Naive thymus-derived CD8-positive, alpha-beta T cell (primary cell): ENCODE measurements at regions of chr12 and their contacts with region 1.

Region 1: GRCh38 chr12:122871851-122872780 is 23.8 kb downstream of the VPS37B start:
- DNase-seq: peak in 4 of 10 donors; percentile 37 to 62 (median 42)
- ATAC-seq: peak; percentile 42 to 49
- H3K4me3 Mint-ChIP-seq: peak overlapping the region; percentile 75 to 97 (median 91)
- H3K27ac Mint-ChIP-seq: peak overlapping the region; percentile 88 to 97 (median 94)
- H3K4me1 Mint-ChIP-seq: peaks cover 31 to 86% (median 68%) of the 10 kb centered on the region in 4 donors
- H3K27me3 Mint-ChIP-seq: no peaks in the 10 kb centered on the region

Region 2: GRCh38 chr12:122860346-122861090 is 11.6 kb before region 1 on chr12:
- POLR2A ChIA-PET with region 1: interaction called, 10 read pairs
- DNase-seq: peak; percentile 63 to 89 (median 76)
- ATAC-seq: peak; percentile 55 to 57
- H3K4me3 Mint-ChIP-seq: no peak overlapping the region
- H3K27ac Mint-ChIP-seq: peak overlapping the region in 5 of 10 donors; percentile 18 to 65 (median 53)
- H3K4me1 Mint-ChIP-seq: peaks cover 0 to 18% (median 12%) of the 10 kb centered on the region in 4 donors
- H3K27me3 Mint-ChIP-seq: no peaks in the 10 kb centered on the region

Region 3: DNA sequence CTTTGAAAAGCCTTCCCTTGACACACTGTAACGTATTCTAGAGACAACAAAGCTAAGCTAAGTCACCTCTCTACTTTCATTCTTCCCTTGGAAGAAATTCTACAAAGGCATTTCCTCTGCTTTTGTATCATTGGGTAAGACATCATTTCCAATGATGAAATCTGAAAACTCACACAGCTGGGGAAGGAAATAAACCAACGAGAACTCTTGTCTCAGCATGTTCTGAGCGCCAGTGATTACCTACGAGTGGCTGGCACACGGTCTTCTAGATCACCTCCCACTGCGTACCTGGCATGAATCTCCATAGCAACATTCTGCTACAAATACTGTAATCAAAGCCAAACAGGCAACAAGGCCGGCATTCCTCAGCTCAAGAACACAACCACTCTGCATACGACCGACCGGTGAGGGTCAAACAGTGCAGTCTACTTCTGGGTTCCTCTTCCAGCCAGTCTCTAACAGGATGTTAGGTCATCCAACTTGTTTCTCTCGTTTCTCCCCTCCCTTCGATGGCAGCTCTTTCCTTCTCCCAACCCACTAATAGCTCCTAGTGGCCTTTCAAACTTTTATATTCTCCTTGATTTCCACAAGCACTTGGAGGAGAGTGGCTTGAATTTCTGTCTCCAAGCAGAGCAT is 16.2 kb after region 1 on chr12:
- POLR2A ChIA-PET with region 1: interaction called, 27 read pairs
- DNase-seq: peak in 8 of 10 donors; percentile 43 to 88 (median 76)
- ATAC-seq: peak; percentile 86 to 91
- H3K4me3 Mint-ChIP-seq: peak overlapping the region; percentile 67 to 91 (median 82)
- H3K27ac Mint-ChIP-seq: peak overlapping the region; percentile 88 to 99 (median 94)
- H3K4me1 Mint-ChIP-seq: peaks cover 31 to 94% (median 83%) of the 10 kb centered on the region in 4 donors
- H3K27me3 Mint-ChIP-seq: no peaks in the 10 kb centered on the region